Spleen (tissue), 13 donors: ENCODE measurements at regions of chr1 and their contacts with region 1.

Region 1: DNA sequence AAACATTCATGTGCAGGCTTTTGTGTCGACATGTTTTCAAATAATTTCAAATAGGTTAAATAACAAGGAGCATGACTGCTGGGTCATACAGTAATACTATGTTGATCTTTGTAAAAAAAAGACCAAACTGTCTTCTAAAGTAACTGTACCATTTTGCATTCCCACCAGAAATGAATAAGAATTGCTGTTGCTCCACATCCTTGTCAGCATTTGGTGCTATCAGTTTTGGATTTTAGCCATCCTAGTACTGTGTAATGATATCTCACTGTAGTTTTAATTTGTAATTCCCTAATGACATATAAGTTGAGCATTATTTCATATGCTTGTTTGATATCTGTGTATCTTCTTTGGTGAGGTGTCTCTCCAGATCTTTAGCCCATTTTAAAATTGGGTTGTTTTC is 11.6 kb downstream of the UROD start:
- DNase-seq: no peak
- H3K4me3 ChIP-seq: no peak overlapping the region
- H3K27ac ChIP-seq: no peak overlapping the region
- H3K4me1 ChIP-seq: no peaks in the 10 kb centered on the region
- H3K27me3 ChIP-seq: no peaks in the 10 kb centered on the region
- CTCF ChIP-seq: no peak
- POLR2A ChIP-seq: no peak

Region 2: GRCh38 chr1:45205910-45206721 is 182.5 kb after region 1 on chr1 and contains the start of gene ZSWIM5:
- intact Hi-C with region 1: loop called (anchors 5 kb)
- DNase-seq: peak; percentile 90
- H3K4me3 ChIP-seq: peak within 1 kb of the TSS; percentile 77 to 97 (median 89)
- H3K27ac ChIP-seq: peak within 1 kb of the TSS; percentile 71 to 90 (median 86)
- H3K4me1 ChIP-seq: peaks cover 5 to 30% (median 26%) of the 10 kb centered on the region in 6 donors
- H3K27me3 ChIP-seq: peaks cover 0 to 49% (median 4%) of the 10 kb centered on the region in 7 donors
- CTCF ChIP-seq: no peak
- POLR2A ChIP-seq: no peak
- total RNA-seq, gene ZSWIM5: 2.4 to 4.7 (median 3.6) TPM